ENCODE measurements at regions of chr18 and their contacts with region 1.

Region 1: DNA sequence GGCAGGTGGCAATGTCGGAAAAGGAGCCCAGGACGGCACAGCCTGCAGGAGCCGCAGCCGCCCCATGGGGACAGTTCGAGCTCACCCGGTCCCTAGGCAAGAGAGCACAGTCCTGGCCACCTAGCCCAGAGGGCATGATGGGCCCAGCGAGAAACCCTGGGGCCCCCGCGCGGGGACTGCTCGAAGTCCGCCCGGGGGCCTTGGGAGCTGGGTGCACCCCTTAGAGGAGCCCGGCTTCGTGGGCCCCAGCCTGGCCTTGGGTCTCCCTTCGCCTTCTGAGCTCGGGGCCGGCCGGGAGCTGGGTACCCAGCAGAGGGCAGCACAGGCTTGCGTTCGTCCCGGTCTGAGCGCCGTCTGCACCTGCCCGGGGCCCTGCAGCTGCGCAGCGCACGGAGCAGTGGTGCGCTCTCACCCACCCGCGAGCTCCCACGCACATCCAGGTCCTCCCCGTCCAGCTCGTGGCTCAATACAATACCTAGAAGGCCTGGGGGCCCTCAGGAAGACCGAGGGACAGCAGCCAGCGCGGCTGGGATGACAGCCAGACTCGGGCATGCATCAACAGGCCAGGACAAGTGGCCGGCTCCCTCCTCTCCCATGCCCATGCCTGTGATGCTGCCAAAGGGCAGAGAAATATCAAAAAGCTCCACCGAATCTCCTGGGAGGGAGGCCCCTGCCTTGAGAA is 96.2 kb upstream of the ZNF532 start:
- DNase-seq: peak; percentile 34 to 77 (median 64)
- ATAC-seq: peak; percentile 78
- H3K4me3 ChIP-seq: no peak overlapping the region
- H3K4me3 Mint-ChIP-seq: peak overlapping the region; percentile 57
- H3K27ac ChIP-seq: no peak overlapping the region
- H3K27ac Mint-ChIP-seq: no peak overlapping the region
- H3K4me1 ChIP-seq: peaks cover 13% of the 10 kb centered on the region
- H3K4me1 Mint-ChIP-seq: peaks cover 11% of the 10 kb centered on the region
- H3K27me3 ChIP-seq: peaks cover 0 to 4% of the 10 kb centered on the region in 2 experiments
- H3K27me3 Mint-ChIP-seq: peaks cover 41% of the 10 kb centered on the region
- CTCF ChIP-seq: peak; percentile 42

Region 2: GRCh38 chr18:58501066-58501896 is 267.2 kb before region 1 on chr18:
- CTCF ChIA-PET with region 1: interaction called, 27 read pairs
- POLR2A ChIA-PET with region 1: no interaction called
- intact Hi-C with region 1: no loop called
- DNase-seq: peak in 1 of 9 experiments; percentile 19
- ATAC-seq: no peak
- H3K4me3 ChIP-seq: no peak overlapping the region
- H3K4me3 Mint-ChIP-seq: peak overlapping the region; percentile 33
- H3K27ac ChIP-seq: no peak overlapping the region
- H3K27ac Mint-ChIP-seq: no peak overlapping the region
- H3K4me1 ChIP-seq: peaks cover 49% of the 10 kb centered on the region
- H3K4me1 Mint-ChIP-seq: peaks cover 23% of the 10 kb centered on the region
- H3K27me3 ChIP-seq: no peaks in the 10 kb centered on the region
- H3K27me3 Mint-ChIP-seq: peaks cover 9% of the 10 kb centered on the region
- CTCF ChIP-seq: no peak

Region 3: GRCh38 chr18:58520969-58521368 is 247.5 kb before region 1 on chr18:
- CTCF ChIA-PET with region 1: interaction called, 606 read pairs
- POLR2A ChIA-PET with region 1: no interaction called
- intact Hi-C with region 1: no loop called
- DNase-seq: peak in 1 of 9 experiments; percentile 39
- ATAC-seq: no peak
- H3K4me3 ChIP-seq: no peak overlapping the region
- H3K4me3 Mint-ChIP-seq: no peak overlapping the region
- H3K27ac ChIP-seq: no peak overlapping the region
- H3K27ac Mint-ChIP-seq: no peak overlapping the region
- H3K4me1 ChIP-seq: no peaks in the 10 kb centered on the region
- H3K4me1 Mint-ChIP-seq: no peaks in the 10 kb centered on the region
- H3K27me3 ChIP-seq: no peaks in the 10 kb centered on the region
- H3K27me3 Mint-ChIP-seq: peaks cover 15% of the 10 kb centered on the region
- CTCF ChIP-seq: no peak

Region 4: GRCh38 chr18:58593930-58594329 is 174.5 kb before region 1 on chr18:
- CTCF ChIA-PET with region 1: interaction called, 10 read pairs
- POLR2A ChIA-PET with region 1: no interaction called
- intact Hi-C with region 1: no loop called
- DNase-seq: no peak
- ATAC-seq: no peak
- H3K4me3 ChIP-seq: no peak overlapping the region
- H3K4me3 Mint-ChIP-seq: no peak overlapping the region
- H3K27ac ChIP-seq: no peak overlapping the region
- H3K27ac Mint-ChIP-seq: no peak overlapping the region
- H3K4me1 ChIP-seq: no peaks in the 10 kb centered on the region
- H3K4me1 Mint-ChIP-seq: no peaks in the 10 kb centered on the region
- H3K27me3 ChIP-seq: no peaks in the 10 kb centered on the region
- H3K27me3 Mint-ChIP-seq: no peaks in the 10 kb centered on the region
- CTCF ChIP-seq: no peak

Region 5: DNA sequence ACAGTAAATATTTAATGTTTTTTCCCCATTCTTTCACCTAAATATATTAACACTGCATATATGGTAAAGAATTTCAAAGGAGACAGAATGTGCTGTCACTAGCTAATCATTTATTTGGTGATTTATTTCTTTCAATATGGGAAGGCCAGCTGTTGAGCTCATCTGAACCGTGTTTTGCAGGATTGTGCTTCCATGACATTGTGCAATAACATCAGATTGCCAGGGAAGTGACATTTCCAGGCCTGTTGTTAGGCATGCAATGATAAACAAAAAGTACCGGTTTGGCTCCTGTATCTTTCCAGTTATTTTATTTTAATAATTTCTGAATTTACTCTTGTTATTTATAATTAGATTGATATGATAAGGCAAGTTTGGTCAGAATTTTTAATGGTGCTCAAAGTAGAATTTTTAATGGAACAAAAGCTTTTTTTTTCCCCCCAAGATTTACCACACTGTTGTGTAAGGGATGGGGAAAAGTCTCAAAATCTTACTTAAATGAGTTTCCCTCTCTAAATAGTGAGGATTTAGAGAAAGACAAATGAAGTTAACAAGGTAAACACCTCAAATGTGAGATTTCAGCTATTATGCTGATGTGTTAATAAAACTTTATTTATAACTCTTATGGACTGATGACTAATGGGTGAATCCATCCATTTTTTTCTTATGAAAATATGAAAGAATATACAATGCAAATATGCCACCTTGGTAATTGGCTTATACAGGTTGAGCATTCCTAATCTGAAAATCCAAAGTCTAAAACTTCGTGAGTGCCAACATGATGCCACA is 44.4 kb before region 1 on chr18:
- CTCF ChIA-PET with region 1: interaction called, 12 read pairs
- POLR2A ChIA-PET with region 1: no interaction called
- intact Hi-C with region 1: no loop called
- DNase-seq: no peak
- ATAC-seq: no peak
- H3K4me3 ChIP-seq: no peak overlapping the region
- H3K4me3 Mint-ChIP-seq: no peak overlapping the region
- H3K27ac ChIP-seq: no peak overlapping the region
- H3K27ac Mint-ChIP-seq: no peak overlapping the region
- H3K4me1 ChIP-seq: peaks cover 6% of the 10 kb centered on the region
- H3K4me1 Mint-ChIP-seq: peaks cover 21% of the 10 kb centered on the region
- H3K27me3 ChIP-seq: no peaks in the 10 kb centered on the region
- H3K27me3 Mint-ChIP-seq: no peaks in the 10 kb centered on the region
- CTCF ChIP-seq: no peak

Region 6: DNA sequence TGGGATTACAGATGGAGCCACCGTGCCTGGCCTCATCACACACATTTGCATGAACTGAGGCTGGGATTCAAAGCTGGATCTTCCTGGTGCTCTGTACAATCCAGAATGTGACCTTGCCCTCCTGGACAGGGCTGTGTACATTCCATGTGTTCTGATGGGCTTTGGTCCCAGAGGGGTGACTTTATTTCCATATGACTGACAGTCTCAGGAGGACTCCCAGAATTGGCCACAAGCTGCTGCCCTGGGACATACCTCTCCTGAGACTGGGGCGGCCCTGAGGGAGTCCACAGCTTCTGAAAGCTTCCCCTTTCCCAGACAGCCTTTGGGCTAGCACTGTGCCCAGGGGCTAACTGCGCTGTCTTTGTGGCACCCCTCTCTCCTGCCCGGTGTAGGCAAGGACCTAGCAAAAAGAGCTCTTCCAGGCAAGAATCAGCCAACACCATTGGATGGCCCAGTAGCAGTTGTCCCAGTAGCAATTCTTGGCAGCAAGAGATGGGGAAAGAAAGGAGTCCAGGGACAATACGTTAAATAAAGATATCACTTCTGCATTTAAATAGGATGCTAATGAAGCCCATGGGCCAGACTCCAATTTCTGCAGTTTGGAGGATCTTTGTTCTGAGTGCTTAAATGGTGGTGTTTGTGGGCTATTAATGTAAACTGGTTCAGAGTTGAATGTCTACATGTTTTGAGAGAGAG is 69.9 kb after region 1 on chr18:
- CTCF ChIA-PET with region 1: no interaction called
- POLR2A ChIA-PET with region 1: no interaction called
- intact Hi-C with region 1: no loop called
- DNase-seq: no peak
- ATAC-seq: no peak
- H3K4me3 ChIP-seq: no peak overlapping the region
- H3K4me3 Mint-ChIP-seq: no peak overlapping the region
- H3K27ac ChIP-seq: no peak overlapping the region
- H3K27ac Mint-ChIP-seq: no peak overlapping the region
- H3K4me1 ChIP-seq: no peaks in the 10 kb centered on the region
- H3K4me1 Mint-ChIP-seq: no peaks in the 10 kb centered on the region
- H3K27me3 ChIP-seq: no peaks in the 10 kb centered on the region
- H3K27me3 Mint-ChIP-seq: peaks cover 29% of the 10 kb centered on the region
- CTCF ChIP-seq: no peak

Region 7: DNA sequence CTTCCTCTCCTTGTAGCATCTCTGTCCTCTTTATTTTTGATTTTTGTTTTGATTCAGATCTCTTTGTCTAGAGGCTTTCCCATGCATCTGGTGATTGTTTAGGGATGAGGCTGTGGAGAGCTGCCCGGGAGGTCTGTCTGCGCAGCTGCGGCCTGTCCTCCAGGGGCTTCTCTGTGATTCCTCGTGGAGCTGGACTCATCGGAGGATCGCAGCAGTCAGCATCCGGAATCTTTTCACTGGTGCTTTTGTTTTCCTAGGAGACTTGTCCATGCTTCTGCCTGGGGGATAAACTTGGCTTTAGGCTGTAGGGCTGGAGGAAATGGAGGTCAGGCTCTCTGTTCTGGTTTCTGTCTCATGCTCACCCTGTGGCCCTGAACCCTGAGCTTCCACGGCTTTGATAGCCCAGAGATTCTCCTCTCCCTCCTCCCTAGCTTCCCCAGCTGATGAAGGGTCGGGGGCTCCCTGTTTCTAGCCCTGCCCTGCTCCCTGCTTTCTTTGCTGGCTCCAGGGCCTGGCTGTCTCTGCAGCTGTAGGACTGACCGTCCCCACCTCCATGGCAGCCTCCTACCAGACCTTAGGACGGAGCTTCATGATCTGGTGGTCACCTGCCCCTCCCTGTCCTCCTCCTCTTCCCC is 131.7 kb after region 1 on chr18:
- CTCF ChIA-PET with region 1: no interaction called
- POLR2A ChIA-PET with region 1: no interaction called
- intact Hi-C with region 1: no loop called
- DNase-seq: no peak
- ATAC-seq: no peak
- H3K4me3 ChIP-seq: no peak overlapping the region
- H3K4me3 Mint-ChIP-seq: no peak overlapping the region
- H3K27ac ChIP-seq: no peak overlapping the region
- H3K27ac Mint-ChIP-seq: no peak overlapping the region
- H3K4me1 ChIP-seq: peaks cover 12% of the 10 kb centered on the region
- H3K4me1 Mint-ChIP-seq: peaks cover 15% of the 10 kb centered on the region
- H3K27me3 ChIP-seq: no peaks in the 10 kb centered on the region
- H3K27me3 Mint-ChIP-seq: peaks cover 21% of the 10 kb centered on the region
- CTCF ChIP-seq: no peak

Region 8: GRCh38 chr18:59070181-59070912 is 301.9 kb after region 1 on chr18:
- CTCF ChIA-PET with region 1: interaction called, 67 read pairs
- POLR2A ChIA-PET with region 1: no interaction called
- intact Hi-C with region 1: loop called (anchors 1 kb)
- DNase-seq: peak; percentile 48 to 82 (median 70)
- ATAC-seq: peak; percentile 78
- H3K4me3 ChIP-seq: no peak overlapping the region
- H3K4me3 Mint-ChIP-seq: no peak overlapping the region
- H3K27ac ChIP-seq: no peak overlapping the region
- H3K27ac Mint-ChIP-seq: no peak overlapping the region
- H3K4me1 ChIP-seq: no peaks in the 10 kb centered on the region
- H3K4me1 Mint-ChIP-seq: no peaks in the 10 kb centered on the region
- H3K27me3 ChIP-seq: no peaks in the 10 kb centered on the region
- H3K27me3 Mint-ChIP-seq: peaks cover 2% of the 10 kb centered on the region
- CTCF ChIP-seq: peak; percentile 76

Region 9: DNA sequence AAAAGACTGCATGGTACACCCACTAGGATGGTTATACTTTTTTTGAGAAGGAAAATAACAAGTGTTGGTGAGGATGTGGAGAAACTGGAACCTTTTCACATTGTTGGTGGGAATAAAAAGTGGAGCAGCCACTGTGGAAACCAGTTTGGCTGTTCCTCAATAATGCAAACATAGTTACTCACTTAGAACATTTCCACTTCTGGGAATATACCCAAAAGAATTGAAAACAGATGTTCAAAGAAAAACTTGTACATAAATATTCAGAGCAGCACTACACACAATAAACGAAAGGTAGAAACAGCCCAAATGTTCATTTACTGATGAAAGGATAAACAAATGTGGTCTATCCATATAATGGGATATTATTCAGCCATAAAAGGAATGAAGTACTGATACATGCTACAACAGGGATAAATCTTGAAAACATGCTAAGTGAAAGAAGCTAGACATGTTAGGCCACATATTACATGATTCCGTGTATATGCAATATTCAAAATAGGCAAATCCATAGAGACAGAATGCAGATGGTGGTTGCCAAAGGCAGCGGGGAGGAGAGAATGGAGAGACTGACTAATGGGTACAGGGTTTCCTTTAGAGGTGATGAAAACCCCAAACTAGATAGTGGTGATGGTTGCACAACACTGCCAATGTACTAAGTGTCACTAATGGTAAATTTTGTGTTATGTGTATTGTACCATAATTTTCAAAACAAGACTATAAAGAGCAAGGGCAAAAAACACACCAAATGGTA is 611.5 kb after region 1 on chr18:
- CTCF ChIA-PET with region 1: no interaction called
- POLR2A ChIA-PET with region 1: no interaction called
- intact Hi-C with region 1: no loop called
- DNase-seq: no peak
- ATAC-seq: no peak
- H3K4me3 ChIP-seq: no peak overlapping the region
- H3K4me3 Mint-ChIP-seq: no peak overlapping the region
- H3K27ac ChIP-seq: no peak overlapping the region
- H3K27ac Mint-ChIP-seq: no peak overlapping the region
- H3K4me1 ChIP-seq: no peaks in the 10 kb centered on the region
- H3K4me1 Mint-ChIP-seq: no peaks in the 10 kb centered on the region
- H3K27me3 ChIP-seq: no peaks in the 10 kb centered on the region
- H3K27me3 Mint-ChIP-seq: peaks cover 27% of the 10 kb centered on the region
- CTCF ChIP-seq: no peak

Region 10: DNA sequence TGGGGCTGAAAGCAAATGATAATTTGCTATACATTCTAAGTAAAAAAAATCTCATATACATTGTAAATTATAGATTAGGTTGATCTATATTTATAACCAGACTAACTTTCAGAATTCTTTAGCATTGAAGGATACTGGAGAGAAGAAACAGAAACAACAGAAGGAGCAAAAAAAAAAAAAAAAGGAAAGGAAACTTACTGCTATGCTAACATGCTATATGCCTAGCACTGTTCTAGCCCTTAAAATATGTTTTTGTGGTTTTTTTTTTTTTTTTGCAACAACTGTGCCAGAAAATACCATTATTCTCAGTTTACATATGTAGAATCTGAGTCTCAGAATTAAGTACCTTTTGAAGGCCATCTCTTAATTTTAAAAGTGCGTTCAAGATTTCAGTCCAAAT is 1809.0 kb after region 1 on chr18:
- CTCF ChIA-PET with region 1: no interaction called
- POLR2A ChIA-PET with region 1: no interaction called
- intact Hi-C with region 1: no loop called
- DNase-seq: no peak
- ATAC-seq: no peak
- H3K4me3 ChIP-seq: no peak overlapping the region
- H3K4me3 Mint-ChIP-seq: no peak overlapping the region
- H3K27ac ChIP-seq: no peak overlapping the region
- H3K27ac Mint-ChIP-seq: no peak overlapping the region
- H3K4me1 ChIP-seq: no peaks in the 10 kb centered on the region
- H3K4me1 Mint-ChIP-seq: no peaks in the 10 kb centered on the region
- H3K27me3 ChIP-seq: no peaks in the 10 kb centered on the region
- H3K27me3 Mint-ChIP-seq: no peaks in the 10 kb centered on the region
- CTCF ChIP-seq: no peak

Measured in CD8-positive, alpha-beta T cell (primary cell).